ENCODE measurements at regions of chr3 and their contacts with region 1.

Region 1: GRCh38 chr3:152193673-152194267 is 75.0 kb upstream of the MBNL1 start:
- DNase-seq: peak; percentile 82
- H3K4me3 Mint-ChIP-seq: peak overlapping the region; percentile 87
- H3K27ac Mint-ChIP-seq: peak overlapping the region; percentile 96
- H3K4me1 Mint-ChIP-seq: peaks cover 68% of the 10 kb centered on the region
- H3K27me3 Mint-ChIP-seq: no peaks in the 10 kb centered on the region

Region 2: GRCh38 chr3:152071924-152072323 is 121.8 kb before region 1 on chr3:
- intact Hi-C with region 1: loop called (anchors 2 kb)
- DNase-seq: peak; percentile 71
- H3K4me3 Mint-ChIP-seq: no peak overlapping the region
- H3K27ac Mint-ChIP-seq: no peak overlapping the region
- H3K4me1 Mint-ChIP-seq: peaks cover 3% of the 10 kb centered on the region
- H3K27me3 Mint-ChIP-seq: peaks cover 7% of the 10 kb centered on the region

Region 3: DNA sequence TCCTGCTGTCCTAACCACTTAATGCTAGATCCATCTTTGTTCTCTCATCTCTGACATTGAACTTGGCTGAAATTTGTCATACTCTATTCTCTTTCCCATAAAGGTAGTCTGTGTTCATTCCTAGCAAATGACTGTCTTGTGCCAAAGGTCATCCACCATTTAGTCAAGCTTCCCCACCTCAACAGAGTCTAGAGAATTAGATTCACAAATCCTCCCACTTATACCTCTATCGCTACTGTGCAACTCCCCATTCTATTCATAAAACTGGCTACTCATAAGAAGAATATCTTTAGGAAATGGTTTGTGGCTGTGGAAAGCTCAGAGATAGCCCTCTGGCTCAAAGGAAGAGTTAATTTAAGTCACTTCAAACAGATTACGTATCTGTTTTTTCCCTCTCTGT is 15.3 kb after region 1 on chr3:
- intact Hi-C with region 1: loop called (anchors 1 kb)
- DNase-seq: peak; percentile 55
- H3K4me3 Mint-ChIP-seq: peak overlapping the region; percentile 61
- H3K27ac Mint-ChIP-seq: peak overlapping the region; percentile 84
- H3K4me1 Mint-ChIP-seq: peaks cover 66% of the 10 kb centered on the region
- H3K27me3 Mint-ChIP-seq: no peaks in the 10 kb centered on the region

Region 4: DNA sequence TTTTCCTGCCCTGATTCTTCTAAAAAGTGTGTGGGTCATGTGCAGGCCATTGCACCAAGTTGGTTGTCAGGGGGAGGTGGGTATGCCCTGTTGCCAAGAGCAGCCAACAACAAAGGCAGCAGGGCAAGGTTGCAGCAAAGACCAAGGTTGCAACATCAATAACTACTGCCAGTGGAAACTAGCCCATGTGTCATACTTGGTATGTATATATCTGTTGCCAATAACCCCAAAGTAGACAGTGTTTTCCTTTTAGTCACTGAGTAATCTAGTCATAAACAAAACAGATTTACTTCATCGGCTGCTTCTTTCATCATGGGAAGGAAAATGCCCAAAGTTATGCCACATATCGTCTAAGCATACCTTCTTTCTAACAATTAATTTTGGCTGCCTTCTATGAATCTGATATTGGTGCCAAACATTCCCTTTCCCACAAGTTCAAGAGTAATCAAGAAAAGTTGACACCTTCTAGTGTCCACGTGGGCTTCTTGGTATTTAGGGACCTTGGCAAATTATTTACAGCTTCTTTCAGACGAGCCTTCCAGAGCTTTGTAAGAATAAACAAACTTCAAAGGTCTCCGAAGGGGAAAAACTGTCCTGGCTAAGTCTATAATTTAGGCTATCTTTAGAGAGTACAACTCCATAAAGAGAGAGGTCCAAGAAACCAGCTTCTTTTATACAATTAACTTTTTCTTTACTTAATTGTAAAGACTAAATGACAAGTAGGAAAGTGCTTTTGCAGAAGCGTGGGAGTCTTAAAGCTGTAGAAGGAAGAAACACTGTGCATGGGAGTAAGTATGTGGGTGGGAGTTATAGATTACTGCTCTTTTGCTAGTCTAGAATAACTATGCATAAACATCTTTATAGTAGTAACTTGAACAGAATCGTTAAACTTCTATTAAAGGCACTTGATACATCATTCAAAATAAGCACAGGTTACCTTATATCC is 65.0 kb after region 1 on chr3:
- intact Hi-C with region 1: loop called (anchors 1 kb)
- DNase-seq: peak; percentile 89
- H3K4me3 Mint-ChIP-seq: peak overlapping the region; percentile 79
- H3K27ac Mint-ChIP-seq: peak overlapping the region; percentile 97
- H3K4me1 Mint-ChIP-seq: peaks cover 75% of the 10 kb centered on the region
- H3K27me3 Mint-ChIP-seq: no peaks in the 10 kb centered on the region

Measured in activated CD4-positive, alpha-beta T cell treated with anti-CD3 and anti-CD28 coated beads, Interleukin-2, amount 10 ng/mL, durations not matched to agents 24 days and 14 days (primary cell).